GM10248 (cell line): ENCODE measurements at regions of chr1 and their contacts with region 1.

Region 1: GRCh38 chr1:209747580-209748262 is 8.1 kb upstream of the TRAF3IP3 start:
- DNase-seq: peak; percentile 82
- CTCF ChIP-seq: peak; percentile 81

Region 2: DNA sequence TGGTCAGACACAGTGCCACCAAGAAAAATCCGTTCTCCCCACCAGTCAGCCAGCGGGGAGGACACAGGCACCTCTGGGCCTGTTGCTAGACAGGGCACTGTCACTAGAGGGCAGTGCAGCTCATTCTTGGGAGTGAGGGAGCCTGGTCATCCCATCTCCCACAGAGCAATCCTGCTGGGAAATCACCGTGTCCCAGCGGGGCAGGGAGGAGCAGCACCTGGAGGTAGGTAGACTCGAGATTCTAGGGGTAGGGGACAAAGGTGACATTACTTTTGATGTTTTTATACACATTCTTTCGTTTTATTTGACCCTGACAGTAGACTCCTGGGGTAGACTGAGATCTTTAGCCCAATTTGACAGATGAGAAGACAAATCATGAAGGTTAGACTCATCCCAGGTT is 170.9 kb before region 1 on chr1:
- CTCF ChIA-PET with region 1: interaction called, 42 read pairs
- POLR2A ChIA-PET with region 1: no interaction called
- DNase-seq: peak; percentile 80
- CTCF ChIP-seq: peak; percentile 91

Region 3: GRCh38 chr1:209651148-209651547 is 96.6 kb before region 1 on chr1:
- CTCF ChIA-PET with region 1: interaction called, 24 read pairs
- POLR2A ChIA-PET with region 1: no interaction called
- DNase-seq: peak; percentile 68
- CTCF ChIP-seq: no peak

Region 4: GRCh38 chr1:209704584-209704983 is 43.1 kb before region 1 on chr1 and contains the start of gene HSD11B1:
- CTCF ChIA-PET with region 1: interaction called, 11 read pairs
- POLR2A ChIA-PET with region 1: no interaction called
- DNase-seq: no peak
- CTCF ChIP-seq: no peak

Region 5: GRCh38 chr1:209733409-209734192 is 14.1 kb before region 1 on chr1:
- CTCF ChIA-PET with region 1: interaction called, 57 read pairs
- POLR2A ChIA-PET with region 1: no interaction called
- DNase-seq: no peak
- CTCF ChIP-seq: no peak

Region 6: GRCh38 chr1:209774592-209774991 is 26.9 kb after region 1 on chr1:
- CTCF ChIA-PET with region 1: interaction called, 40 read pairs
- POLR2A ChIA-PET with region 1: no interaction called
- DNase-seq: no peak
- CTCF ChIP-seq: no peak

Region 7: GRCh38 chr1:209797978-209798639 is 50.4 kb after region 1 on chr1:
- CTCF ChIA-PET with region 1: no interaction called
- POLR2A ChIA-PET with region 1: no interaction called
- DNase-seq: no peak
- CTCF ChIP-seq: no peak

Region 8: GRCh38 chr1:209860293-209860881 is 112.7 kb after region 1 on chr1:
- CTCF ChIA-PET with region 1: no interaction called
- POLR2A ChIA-PET with region 1: no interaction called
- DNase-seq: peak; percentile 79
- CTCF ChIP-seq: peak; percentile 88